Left colon (tissue), 2 donors: ENCODE measurements at regions of chr9 and their contacts with region 1.

Region 1: DNA sequence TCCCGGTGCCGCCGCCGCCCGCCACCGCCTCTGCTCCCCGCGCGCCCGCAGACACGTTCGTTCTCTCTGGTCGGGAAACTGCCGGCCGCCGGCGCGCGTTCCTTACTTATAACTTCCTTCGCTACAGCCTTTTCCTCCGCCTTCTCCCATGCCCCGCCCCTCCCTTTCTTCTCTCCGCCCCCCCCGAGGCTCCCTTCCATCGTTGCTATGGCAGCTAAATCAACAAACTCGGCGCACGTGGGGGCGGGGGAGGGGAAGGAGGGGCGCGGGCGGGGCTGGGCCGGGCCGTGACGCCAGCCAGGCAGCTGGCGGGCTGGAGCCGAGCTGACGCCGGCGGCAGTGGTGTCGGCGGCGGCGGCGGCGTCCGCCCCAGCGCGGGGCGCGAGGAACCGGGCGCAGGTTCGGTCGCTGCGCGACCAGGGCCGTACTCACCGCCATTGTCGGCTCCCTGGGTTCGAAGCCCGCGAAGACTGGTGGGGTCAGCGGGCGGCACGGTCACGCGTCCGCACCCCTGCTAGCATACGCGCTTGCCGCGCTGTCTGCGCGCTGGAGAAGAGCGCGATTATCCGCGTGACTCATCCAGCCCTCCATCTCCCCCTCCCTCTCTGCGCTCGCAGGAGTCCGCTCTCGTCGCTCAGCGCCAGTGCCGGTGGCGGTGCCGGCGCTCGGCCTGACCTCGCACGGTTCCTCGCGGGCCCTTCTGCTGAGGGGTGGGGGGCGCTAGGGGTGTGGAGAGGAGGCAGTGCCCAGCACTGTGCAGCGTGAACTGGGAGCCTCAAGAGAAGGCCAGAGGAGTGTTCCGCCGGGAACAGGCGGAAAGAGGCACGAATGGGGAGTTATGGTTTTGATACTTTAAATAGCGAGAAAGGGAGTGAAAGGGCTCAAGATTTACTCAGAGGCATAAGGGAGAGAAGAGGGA is at the start of gene KLF4:
- DNase-seq: peak; percentile 89 to 93
- ATAC-seq: peak; percentile 59
- total RNA-seq, gene KLF4: 481 to 507 TPM

Region 2: DNA sequence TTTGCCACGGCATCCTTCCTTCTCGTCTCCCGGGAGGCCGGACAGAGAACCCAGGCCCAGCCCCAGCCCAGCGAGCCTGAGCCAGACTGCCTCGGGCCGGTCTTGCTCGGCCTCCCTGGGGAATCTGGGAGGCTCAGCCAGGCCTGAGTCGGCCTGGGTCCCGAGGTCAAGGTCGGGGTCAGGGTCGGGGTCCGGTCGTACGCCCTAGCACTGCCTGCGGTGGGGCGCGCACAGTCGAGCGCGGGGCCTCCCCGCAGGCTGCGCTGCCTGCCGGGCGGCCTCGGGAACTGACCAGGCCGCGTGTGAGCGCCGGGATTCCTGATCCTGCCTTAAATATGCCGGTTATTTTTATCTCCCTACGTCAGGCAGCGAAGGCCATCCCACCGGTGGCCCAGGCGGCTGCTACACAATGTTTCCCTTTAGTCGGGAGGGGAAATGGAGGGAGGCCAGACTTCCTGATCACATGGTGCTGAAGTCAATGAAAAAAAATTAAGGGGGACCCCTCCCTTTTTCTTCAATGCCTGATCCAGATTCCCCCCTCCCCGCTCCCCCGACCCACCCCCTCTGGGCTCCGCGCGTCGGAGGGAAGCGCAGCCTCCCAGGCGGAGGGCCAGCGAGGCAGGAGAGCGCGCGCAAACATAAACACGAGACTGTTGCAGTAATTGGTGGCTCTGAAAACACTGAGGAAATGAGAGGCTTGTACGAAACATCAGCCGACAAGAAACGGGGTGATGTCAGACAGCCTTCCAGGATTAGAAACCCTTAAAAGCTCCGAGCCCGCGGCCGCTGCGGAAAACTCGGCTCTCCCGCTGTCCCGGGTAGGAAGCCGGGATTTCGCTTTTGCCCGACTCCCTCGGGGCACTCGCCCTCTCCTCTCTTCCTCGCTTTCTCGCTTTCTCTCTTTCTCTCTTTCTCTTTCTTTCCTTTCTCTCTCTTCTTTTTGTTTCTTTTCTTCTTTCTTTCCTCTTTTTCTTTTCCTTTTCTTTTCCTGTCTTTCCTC is 147.8 kb after region 1 on chr9:
- intact Hi-C with region 1: loop called in 1 of 2 experiments (anchors 5 kb)
- DNase-seq: peak; percentile 78 to 90
- ATAC-seq: peak; percentile 64